Naive thymus-derived CD4-positive, alpha-beta T cell (primary cell): ENCODE measurements at regions of chr3 and their contacts with region 1.

Region 1: DNA sequence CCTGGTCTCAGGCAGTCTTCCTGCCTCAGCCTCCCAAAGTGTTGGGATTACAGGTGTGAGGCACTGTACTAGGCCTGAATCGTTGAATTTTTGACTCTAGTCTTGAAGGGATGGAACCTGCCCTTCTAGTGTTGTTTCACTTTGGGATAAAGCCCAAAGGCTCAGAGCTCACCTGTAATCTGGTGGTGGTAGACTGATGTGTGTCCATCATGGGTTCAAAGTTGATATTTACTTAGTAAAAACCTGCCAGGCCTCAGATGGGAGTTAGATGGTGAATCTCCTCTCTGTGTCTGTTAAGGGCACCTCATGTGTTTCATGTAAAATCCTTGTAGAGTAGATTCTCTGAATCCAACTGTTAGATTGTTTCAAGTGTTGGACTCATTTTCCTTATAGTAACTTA is 41.1 kb downstream of the FNDC3B start:
- DNase-seq: no peak
- ATAC-seq: no peak
- H3K4me3 ChIP-seq: no peak overlapping the region
- H3K4me3 Mint-ChIP-seq: no peak overlapping the region
- H3K27ac ChIP-seq: no peak overlapping the region
- H3K27ac Mint-ChIP-seq: no peak overlapping the region
- H3K4me1 ChIP-seq: no peaks in the 10 kb centered on the region
- H3K4me1 Mint-ChIP-seq: peaks cover 6 to 37% (median 24%) of the 10 kb centered on the region in 7 donors
- H3K27me3 ChIP-seq: no peaks in the 10 kb centered on the region
- H3K27me3 Mint-ChIP-seq: no peaks in the 10 kb centered on the region

Region 2: DNA sequence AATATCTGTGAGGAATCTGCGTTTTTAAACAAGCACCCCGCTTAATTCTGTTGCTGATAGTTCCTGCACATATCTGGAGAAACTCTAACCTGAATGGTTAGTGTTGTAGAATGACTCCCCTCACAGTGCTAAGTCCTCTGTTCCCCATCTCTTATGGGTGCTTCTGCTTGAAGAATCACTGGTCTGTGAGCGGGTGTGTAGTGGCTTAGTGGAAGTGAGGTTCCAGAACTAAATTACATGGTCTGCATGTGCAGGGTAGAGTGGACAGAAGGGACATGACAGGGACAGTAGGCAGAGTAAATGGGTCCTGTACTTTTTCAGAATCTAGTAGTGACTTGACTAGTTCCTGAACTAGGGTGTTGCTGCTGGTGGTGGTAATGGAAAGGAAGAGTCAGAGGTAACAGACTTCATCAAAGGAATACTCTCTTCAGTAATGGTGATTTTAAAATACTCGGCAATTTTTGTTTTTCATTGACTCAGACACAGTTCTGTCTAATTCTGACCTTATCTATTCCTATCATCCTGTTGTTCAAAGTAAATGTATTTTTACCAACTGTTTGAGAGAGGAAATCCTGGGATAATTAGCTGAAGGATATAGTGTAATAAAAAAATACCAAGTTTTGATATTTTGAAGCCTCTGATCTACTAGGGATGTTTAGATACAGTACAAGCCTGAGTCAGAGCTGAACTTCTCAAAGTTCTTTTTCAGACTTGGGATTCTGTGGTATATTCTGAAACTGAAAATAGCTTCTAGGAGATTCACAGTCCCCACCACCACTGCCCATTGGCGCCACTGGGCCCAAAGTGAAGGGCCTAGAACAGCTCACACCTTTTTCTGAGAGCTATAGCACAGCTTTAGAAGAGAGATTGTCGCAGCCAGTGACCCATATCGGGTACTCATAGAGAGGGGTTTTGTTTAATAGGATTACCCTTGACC is 14.4 kb after region 1 on chr3:
- CTCF ChIA-PET with region 1: no interaction called
- POLR2A ChIA-PET with region 1: no interaction called
- intact Hi-C with region 1: loop called in 1 of 2 experiments (anchors 2 kb)
- DNase-seq: no peak
- ATAC-seq: peak; percentile 58
- H3K4me3 ChIP-seq: no peak overlapping the region
- H3K4me3 Mint-ChIP-seq: peak overlapping the region in 2 of 10 donors; percentile 4 to 45
- H3K27ac ChIP-seq: no peak overlapping the region
- H3K27ac Mint-ChIP-seq: peak overlapping the region in 3 of 9 donors; percentile 21 to 70 (median 56)
- H3K4me1 ChIP-seq: peaks cover 0 to 28% of the 10 kb centered on the region in 2 donors
- H3K4me1 Mint-ChIP-seq: peaks cover 35 to 81% (median 64%) of the 10 kb centered on the region in 7 donors
- H3K27me3 ChIP-seq: no peaks in the 10 kb centered on the region
- H3K27me3 Mint-ChIP-seq: no peaks in the 10 kb centered on the region